ENCODE measurements at regions of chr12 and their contacts with region 1.

Region 1: GRCh38 chr12:113048716-113049127 is 7.8 kb upstream of the DTX1 start:
- DNase-seq: peak; percentile 58 to 73 (median 67)
- H3K4me3 ChIP-seq: no peak overlapping the region
- H3K4me3 Mint-ChIP-seq: peak overlapping the region in 1 of 8 donors; percentile 52
- H3K27ac ChIP-seq: no peak overlapping the region
- H3K27ac Mint-ChIP-seq: peak overlapping the region in 3 of 7 donors; percentile 14 to 65 (median 27)
- H3K4me1 ChIP-seq: peaks cover 8% of the 10 kb centered on the region
- H3K4me1 Mint-ChIP-seq: peaks cover 8 to 28% (median 17%) of the 10 kb centered on the region in 4 donors
- H3K27me3 ChIP-seq: no peaks in the 10 kb centered on the region
- H3K27me3 Mint-ChIP-seq: peaks cover under 1 to 1% of the 10 kb centered on the region in 2 donors

Region 2: GRCh38 chr12:113088971-113089756 is 40.4 kb after region 1 on chr12:
- CTCF ChIA-PET with region 1: interaction called, 12 read pairs
- POLR2A ChIA-PET with region 1: no interaction called
- intact Hi-C with region 1: no loop called
- DNase-seq: peak; percentile 40 to 55 (median 43)
- H3K4me3 ChIP-seq: peak overlapping the region in 1 of 2 donors; percentile 44
- H3K4me3 Mint-ChIP-seq: peak overlapping the region; percentile 63 to 84 (median 73)
- H3K27ac ChIP-seq: peak overlapping the region; percentile 54
- H3K27ac Mint-ChIP-seq: peak overlapping the region; percentile 93 to 96 (median 95)
- H3K4me1 ChIP-seq: peaks cover 81% of the 10 kb centered on the region
- H3K4me1 Mint-ChIP-seq: peaks cover 73 to 96% (median 84%) of the 10 kb centered on the region in 4 donors
- H3K27me3 ChIP-seq: no peaks in the 10 kb centered on the region
- H3K27me3 Mint-ChIP-seq: no peaks in the 10 kb centered on the region

Region 3: DNA sequence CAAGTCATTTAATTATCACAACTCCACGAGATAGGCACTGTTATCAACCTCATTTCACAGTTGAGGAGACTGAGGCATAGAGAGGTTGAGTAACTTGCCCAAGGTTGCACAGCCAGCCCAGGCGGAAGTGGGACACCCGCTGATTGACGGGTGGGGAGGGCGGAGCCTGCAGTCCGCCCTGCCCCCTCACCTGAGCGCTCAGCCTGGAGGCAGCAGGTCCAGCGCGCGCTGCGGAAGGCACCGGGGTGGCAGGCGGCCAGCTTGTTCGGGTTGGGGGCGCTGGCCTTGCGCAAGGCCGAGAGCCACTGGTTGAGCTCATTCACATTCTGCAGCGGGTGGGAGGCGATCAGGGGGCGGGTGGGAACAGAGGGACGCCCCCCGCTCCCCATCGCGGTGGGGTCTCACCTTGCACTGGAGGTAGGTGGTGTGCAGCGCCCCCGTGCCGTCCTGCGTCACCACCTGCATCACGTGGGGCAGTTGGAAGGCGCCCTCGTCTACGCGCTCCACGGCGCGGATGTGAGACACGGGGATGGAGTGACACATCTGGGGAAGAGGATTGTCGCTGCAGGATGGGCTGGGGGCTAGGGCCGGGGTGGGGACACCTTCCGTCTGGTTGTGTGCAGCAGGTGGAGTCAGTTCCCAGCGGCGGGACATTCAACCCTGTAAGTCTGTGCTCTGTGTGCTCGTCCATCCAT is 55.2 kb after region 1 on chr12:
- CTCF ChIA-PET with region 1: interaction called, 139 read pairs
- POLR2A ChIA-PET with region 1: interaction called, 3 read pairs
- intact Hi-C with region 1: loop called (anchors 1 kb)
- DNase-seq: peak; percentile 67 to 78 (median 74)
- H3K4me3 ChIP-seq: peak overlapping the region in 1 of 2 donors; percentile 64
- H3K4me3 Mint-ChIP-seq: peak overlapping the region; percentile 80 to 89 (median 86)
- H3K27ac ChIP-seq: peak overlapping the region; percentile 1
- H3K27ac Mint-ChIP-seq: peak overlapping the region; percentile 66 to 94 (median 87)
- H3K4me1 ChIP-seq: peaks cover 6% of the 10 kb centered on the region
- H3K4me1 Mint-ChIP-seq: peaks cover 9 to 24% (median 14%) of the 10 kb centered on the region in 4 donors
- H3K27me3 ChIP-seq: no peaks in the 10 kb centered on the region
- H3K27me3 Mint-ChIP-seq: peaks cover 0 to 1% of the 10 kb centered on the region in 2 donors

Region 4: GRCh38 chr12:113174461-113175384 is 126.0 kb after region 1 on chr12:
- CTCF ChIA-PET with region 1: interaction called, 38 read pairs
- POLR2A ChIA-PET with region 1: no interaction called
- intact Hi-C with region 1: loop called (anchors 1 kb)
- DNase-seq: peak; percentile 67 to 72 (median 68)
- H3K4me3 ChIP-seq: no peak overlapping the region
- H3K4me3 Mint-ChIP-seq: no peak overlapping the region
- H3K27ac ChIP-seq: no peak overlapping the region
- H3K27ac Mint-ChIP-seq: peak overlapping the region in 4 of 7 donors; percentile 42 to 80 (median 66)
- H3K4me1 ChIP-seq: no peaks in the 10 kb centered on the region
- H3K4me1 Mint-ChIP-seq: peaks cover 2 to 7% (median 4%) of the 10 kb centered on the region in 4 donors
- H3K27me3 ChIP-seq: no peaks in the 10 kb centered on the region
- H3K27me3 Mint-ChIP-seq: no peaks in the 10 kb centered on the region

Region 5: DNA sequence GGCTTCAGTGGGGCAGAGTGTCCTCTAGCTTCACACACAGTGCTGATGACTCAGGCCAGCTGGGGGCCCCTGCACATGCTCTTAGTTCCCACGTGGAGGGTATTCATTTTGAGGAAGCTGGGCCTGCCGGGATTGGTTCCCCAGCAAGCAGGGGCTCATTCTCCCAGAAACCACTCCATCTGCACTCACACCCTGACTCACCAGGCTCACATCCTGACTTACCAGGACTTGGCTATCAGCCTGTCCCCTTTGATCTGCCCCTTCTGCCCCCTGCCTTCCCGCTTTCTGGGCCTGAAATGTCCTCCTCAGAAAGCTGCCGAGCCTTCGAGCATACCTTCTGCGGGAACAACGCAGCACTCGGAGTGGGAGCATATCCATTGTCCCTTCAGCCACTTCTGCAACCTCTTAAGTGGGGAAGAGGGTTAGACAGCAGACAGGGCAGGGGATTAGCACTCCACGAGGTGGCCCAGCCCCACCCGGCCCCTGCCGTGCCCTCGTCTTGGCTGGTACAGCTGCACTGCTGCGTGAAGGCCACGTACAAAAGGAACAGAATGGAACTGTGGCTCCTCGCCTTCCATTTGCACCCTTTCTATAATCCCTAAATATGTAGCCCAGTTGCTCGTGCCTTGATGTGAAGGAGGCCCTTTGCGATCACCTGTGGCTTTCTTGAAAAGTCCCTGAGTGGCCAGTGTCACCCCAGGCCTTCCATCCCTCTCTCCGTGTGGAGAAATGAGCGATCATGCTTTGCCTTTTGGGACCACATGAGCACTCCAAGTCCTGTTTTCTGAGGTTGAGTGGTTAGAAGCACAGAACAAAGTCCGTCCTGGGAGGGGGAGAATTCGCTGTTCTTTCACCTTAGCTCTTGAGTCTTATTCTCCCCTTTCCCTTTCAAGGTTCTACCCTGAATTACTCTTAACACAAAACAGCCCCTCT is 198.7 kb after region 1 on chr12:
- CTCF ChIA-PET with region 1: no interaction called
- POLR2A ChIA-PET with region 1: no interaction called
- intact Hi-C with region 1: no loop called
- DNase-seq: no peak
- H3K4me3 ChIP-seq: no peak overlapping the region
- H3K4me3 Mint-ChIP-seq: no peak overlapping the region
- H3K27ac ChIP-seq: no peak overlapping the region
- H3K27ac Mint-ChIP-seq: no peak overlapping the region
- H3K4me1 ChIP-seq: no peaks in the 10 kb centered on the region
- H3K4me1 Mint-ChIP-seq: peaks cover 5 to 10% (median 7%) of the 10 kb centered on the region in 4 donors
- H3K27me3 ChIP-seq: no peaks in the 10 kb centered on the region
- H3K27me3 Mint-ChIP-seq: no peaks in the 10 kb centered on the region

Region 6: GRCh38 chr12:113424915-113425823 is 376.4 kb after region 1 on chr12:
- CTCF ChIA-PET with region 1: no interaction called
- POLR2A ChIA-PET with region 1: no interaction called
- intact Hi-C with region 1: loop called (anchors 2 kb)
- DNase-seq: peak; percentile 30 to 43 (median 35)
- H3K4me3 ChIP-seq: no peak overlapping the region
- H3K4me3 Mint-ChIP-seq: no peak overlapping the region
- H3K27ac ChIP-seq: no peak overlapping the region
- H3K27ac Mint-ChIP-seq: no peak overlapping the region
- H3K4me1 ChIP-seq: no peaks in the 10 kb centered on the region
- H3K4me1 Mint-ChIP-seq: peaks cover 0 to 13% (median 0%) of the 10 kb centered on the region in 4 donors
- H3K27me3 ChIP-seq: no peaks in the 10 kb centered on the region
- H3K27me3 Mint-ChIP-seq: peaks cover 6 to 11% of the 10 kb centered on the region in 2 donors

Measured in CD4-positive, alpha-beta memory T cell (primary cell).